Common myeloid progenitor, CD34-positive (primary cell): ENCODE measurements at regions of chr6 and their contacts with region 1.

Region 1: GRCh38 chr6:109455502-109456282 is at the start of gene MICAL1:
- DNase-seq: peak; percentile 88 to 94 (median 92)
- H3K4me3 ChIP-seq: peak within 1 kb of the TSS; percentile 83 to 97 (median 88)
- H3K27ac ChIP-seq: peak within 1 kb of the TSS; percentile 75 to 86
- H3K4me1 ChIP-seq: peaks cover 8 to 55% (median 39%) of the 10 kb centered on the region in 4 experiments
- H3K27me3 ChIP-seq: no peaks in the 10 kb centered on the region

Region 2: GRCh38 chr6:109002051-109002697 is 453.5 kb before region 1 on chr6:
- CTCF ChIA-PET with region 1: no interaction called
- POLR2A ChIA-PET with region 1: no interaction called
- DNase-seq: no peak
- H3K4me3 ChIP-seq: no peak overlapping the region
- H3K27ac ChIP-seq: no peak overlapping the region
- H3K4me1 ChIP-seq: peaks cover 0 to 10% (median 3%) of the 10 kb centered on the region in 4 experiments
- H3K27me3 ChIP-seq: no peaks in the 10 kb centered on the region

Region 3: DNA sequence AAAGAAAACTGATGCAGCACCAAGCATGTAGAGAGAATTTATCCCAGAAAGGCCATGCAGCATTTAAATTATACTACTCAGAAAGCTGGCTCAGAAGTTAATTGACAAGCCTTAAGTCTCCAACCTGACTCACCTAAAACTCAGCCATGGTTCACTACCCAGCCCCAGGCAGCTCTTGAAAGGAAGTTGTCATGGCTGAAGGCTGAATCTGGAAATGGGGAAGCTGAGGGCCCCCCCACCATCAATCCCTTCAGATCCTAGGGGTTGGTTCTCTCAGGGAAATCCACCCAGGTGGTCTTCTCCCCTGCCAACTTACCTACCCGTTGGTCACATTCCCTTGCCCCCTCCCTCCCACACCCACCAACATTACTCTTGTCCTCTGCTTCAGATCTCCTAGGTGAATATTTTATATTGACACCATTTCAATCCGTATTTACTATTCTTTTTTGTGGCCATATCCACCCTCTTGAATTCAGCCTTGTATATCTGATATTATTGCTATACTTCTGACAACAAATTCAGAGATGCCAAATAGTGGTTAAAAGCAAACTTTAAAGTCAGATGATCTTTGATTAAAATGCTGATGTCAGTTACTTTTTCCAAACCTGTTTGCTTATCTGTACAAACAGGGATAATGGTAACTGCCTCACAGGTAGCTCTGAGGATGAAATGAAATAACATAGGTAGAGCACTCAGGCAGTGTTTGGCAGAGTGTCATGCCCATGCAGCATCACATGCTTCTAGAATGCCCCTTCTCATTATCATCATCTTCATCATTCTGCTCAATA is 34.7 kb before region 1 on chr6:
- CTCF ChIA-PET with region 1: no interaction called
- POLR2A ChIA-PET with region 1: no interaction called
- DNase-seq: peak in 2 of 3 donors; percentile 64 to 70
- H3K4me3 ChIP-seq: no peak overlapping the region
- H3K27ac ChIP-seq: no peak overlapping the region
- H3K4me1 ChIP-seq: peaks cover 0 to 3% (median 0%) of the 10 kb centered on the region in 4 experiments
- H3K27me3 ChIP-seq: no peaks in the 10 kb centered on the region

Region 4: DNA sequence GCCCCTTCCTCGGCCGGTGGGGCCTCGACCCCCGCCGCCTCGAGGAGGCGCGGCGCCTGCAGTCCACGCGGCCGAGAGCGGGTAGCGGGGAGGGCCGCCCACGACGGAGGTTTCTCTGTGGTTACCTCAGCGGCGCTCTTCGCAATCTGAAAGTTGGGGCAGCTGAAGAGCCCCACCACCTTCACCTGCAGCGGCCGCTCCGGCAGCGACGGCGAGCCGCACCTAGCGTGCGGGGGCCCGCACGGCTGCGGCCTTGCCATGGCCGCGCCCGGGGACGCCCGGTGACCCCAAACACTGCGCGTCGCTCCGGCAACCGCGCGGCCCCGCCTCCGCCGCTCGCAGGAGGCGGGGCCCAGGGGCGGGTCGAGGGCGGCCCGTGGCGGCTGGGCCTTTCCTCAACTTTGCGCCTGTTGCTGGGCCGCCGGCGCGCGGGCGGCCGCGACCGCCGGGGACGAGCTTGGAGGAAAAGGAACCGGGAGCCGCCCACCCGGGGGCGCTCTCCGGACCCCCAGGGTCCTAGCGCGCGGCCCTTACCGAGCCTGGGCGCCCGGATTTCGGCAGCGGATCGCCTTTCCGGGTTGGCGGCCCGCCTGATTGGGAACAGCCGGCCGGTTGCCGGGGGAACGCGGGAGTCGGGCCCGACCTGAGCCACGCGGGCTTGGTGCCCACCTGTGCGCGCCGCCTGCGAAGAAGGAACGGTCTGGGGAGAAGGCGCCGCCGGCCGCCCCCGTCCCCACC is 15.2 kb before region 1 on chr6 and contains the starts of genes PPIL6 and SMPD2:
- CTCF ChIA-PET with region 1: interaction called, 125 read pairs
- POLR2A ChIA-PET with region 1: interaction called, 29 read pairs
- DNase-seq: peak; percentile 88 to 94 (median 94)
- H3K4me3 ChIP-seq: peak within 1 kb of the TSS; percentile 60 to 91 (median 86)
- H3K27ac ChIP-seq: peak within 1 kb of the TSS; percentile 83 to 92
- H3K4me1 ChIP-seq: peaks cover 4 to 24% (median 21%) of the 10 kb centered on the region in 4 experiments
- H3K27me3 ChIP-seq: no peaks in the 10 kb centered on the region